CD8-positive, alpha-beta T cell (primary cell): ENCODE measurements at regions of chr12 and their contacts with region 1.

Region 1: GRCh38 chr12:69070319-69071090 is 137.5 kb upstream of the CPM start:
- DNase-seq: peak; percentile 20 to 67 (median 47)
- ATAC-seq: peak; percentile 58
- H3K4me3 ChIP-seq: no peak overlapping the region
- H3K4me3 Mint-ChIP-seq: no peak overlapping the region
- H3K27ac ChIP-seq: no peak overlapping the region
- H3K27ac Mint-ChIP-seq: no peak overlapping the region
- H3K4me1 ChIP-seq: no peaks in the 10 kb centered on the region
- H3K4me1 Mint-ChIP-seq: no peaks in the 10 kb centered on the region
- H3K27me3 ChIP-seq: no peaks in the 10 kb centered on the region
- H3K27me3 Mint-ChIP-seq: peaks cover 13% of the 10 kb centered on the region
- CTCF ChIP-seq: peak; percentile 71

Region 2: DNA sequence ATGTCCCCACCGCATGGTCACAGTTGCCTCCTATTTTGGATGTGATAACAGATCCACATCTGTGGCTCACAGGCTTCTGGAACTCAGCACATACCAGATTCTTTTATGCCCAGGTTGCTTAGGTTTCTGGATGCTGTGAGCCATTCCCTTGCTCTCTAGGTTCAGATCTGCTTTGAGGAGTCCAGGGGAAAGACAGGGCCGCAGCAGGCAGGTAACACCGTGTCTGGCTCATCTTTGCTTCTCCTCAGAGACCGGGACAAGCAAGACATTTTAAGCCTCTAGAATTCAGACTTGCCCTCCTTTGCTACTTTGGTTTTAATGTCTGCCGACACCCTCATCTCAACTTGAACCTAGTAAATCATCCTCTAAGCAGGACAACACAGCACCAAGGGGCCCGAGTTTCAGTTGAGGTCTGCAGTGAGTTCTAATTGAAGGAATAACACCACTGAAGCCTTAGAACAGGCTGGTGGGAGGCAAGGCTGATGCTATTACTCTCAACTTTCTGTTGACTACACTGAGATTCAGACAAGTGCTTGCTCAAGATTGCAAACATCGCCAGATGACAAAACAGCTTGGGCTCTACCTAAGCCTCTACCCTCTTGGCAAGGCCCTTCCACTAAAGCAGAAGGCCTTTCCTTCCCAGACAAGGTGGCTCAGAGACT is 207.3 kb before region 1 on chr12:
- CTCF ChIA-PET with region 1: no interaction called
- POLR2A ChIA-PET with region 1: no interaction called
- intact Hi-C with region 1: loop called in 1 of 2 experiments (anchors 5 kb)
- DNase-seq: no peak
- ATAC-seq: no peak
- H3K4me3 ChIP-seq: no peak overlapping the region
- H3K4me3 Mint-ChIP-seq: no peak overlapping the region
- H3K27ac ChIP-seq: no peak overlapping the region
- H3K27ac Mint-ChIP-seq: no peak overlapping the region
- H3K4me1 ChIP-seq: no peaks in the 10 kb centered on the region
- H3K4me1 Mint-ChIP-seq: no peaks in the 10 kb centered on the region
- H3K27me3 ChIP-seq: peaks cover 0 to 2% of the 10 kb centered on the region in 2 experiments
- H3K27me3 Mint-ChIP-seq: peaks cover 8% of the 10 kb centered on the region
- CTCF ChIP-seq: no peak

Region 3: GRCh38 chr12:69059483-69060457 is 10.7 kb before region 1 on chr12:
- CTCF ChIA-PET with region 1: interaction called, 12 read pairs
- POLR2A ChIA-PET with region 1: no interaction called
- intact Hi-C with region 1: no loop called
- DNase-seq: no peak
- ATAC-seq: no peak
- H3K4me3 ChIP-seq: no peak overlapping the region
- H3K4me3 Mint-ChIP-seq: no peak overlapping the region
- H3K27ac ChIP-seq: no peak overlapping the region
- H3K27ac Mint-ChIP-seq: no peak overlapping the region
- H3K4me1 ChIP-seq: no peaks in the 10 kb centered on the region
- H3K4me1 Mint-ChIP-seq: no peaks in the 10 kb centered on the region
- H3K27me3 ChIP-seq: no peaks in the 10 kb centered on the region
- H3K27me3 Mint-ChIP-seq: no peaks in the 10 kb centered on the region
- CTCF ChIP-seq: no peak

Region 4: GRCh38 chr12:69096669-69097335 is 26.3 kb after region 1 on chr12:
- CTCF ChIA-PET with region 1: no interaction called
- POLR2A ChIA-PET with region 1: no interaction called
- intact Hi-C with region 1: no loop called
- DNase-seq: no peak
- ATAC-seq: no peak
- H3K4me3 ChIP-seq: no peak overlapping the region
- H3K4me3 Mint-ChIP-seq: no peak overlapping the region
- H3K27ac ChIP-seq: no peak overlapping the region
- H3K27ac Mint-ChIP-seq: no peak overlapping the region
- H3K4me1 ChIP-seq: no peaks in the 10 kb centered on the region
- H3K4me1 Mint-ChIP-seq: no peaks in the 10 kb centered on the region
- H3K27me3 ChIP-seq: no peaks in the 10 kb centered on the region
- H3K27me3 Mint-ChIP-seq: peaks cover 15% of the 10 kb centered on the region
- CTCF ChIP-seq: no peak